K562 (cell line): ENCODE measurements at regions of chr6 and their contacts with region 1.

Region 1: DNA sequence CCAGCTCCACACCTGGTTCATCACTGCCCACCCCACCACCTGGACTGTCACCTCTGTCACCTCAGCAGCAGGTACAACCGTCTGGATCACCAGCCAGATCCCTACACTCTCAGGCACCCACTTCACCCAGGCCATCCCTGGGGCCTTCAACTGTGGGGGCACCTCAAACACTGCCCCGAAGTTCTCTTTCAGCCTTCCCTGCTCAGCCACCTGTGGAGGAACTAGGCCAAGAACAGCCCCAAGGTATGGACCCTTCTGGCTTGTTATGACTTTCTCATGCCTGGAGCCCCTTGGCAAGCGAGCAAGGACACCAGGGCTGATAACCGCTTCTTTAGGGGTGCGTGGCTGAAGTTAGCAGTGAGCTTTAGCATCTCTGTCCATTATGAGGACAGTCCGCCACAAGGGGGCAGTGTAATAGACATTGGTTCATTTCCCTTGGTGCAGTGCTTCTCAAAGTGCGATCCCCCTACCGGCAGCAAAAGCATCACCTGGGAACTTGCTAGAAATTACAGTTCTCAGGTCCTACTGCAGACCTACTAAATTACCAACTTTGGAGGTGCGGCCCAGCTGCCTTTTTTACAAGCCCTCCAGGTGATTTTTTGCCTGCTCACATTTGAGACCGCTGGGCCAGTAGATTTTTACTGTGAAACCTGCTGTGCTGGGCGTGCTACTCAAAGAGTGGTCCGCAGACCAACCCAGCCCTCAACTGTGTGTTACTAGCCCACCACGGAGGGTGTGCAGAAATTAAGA is 32.5 kb downstream of the PNPLA1 start:
- DNase-seq: peak; percentile 85 to 97 (median 88)
- ATAC-seq: peak; percentile 98
- H3K4me3 ChIP-seq: no peak overlapping the region
- H3K27ac ChIP-seq: no peak overlapping the region
- H3K4me1 ChIP-seq: no peaks in the 10 kb centered on the region
- H3K27me3 ChIP-seq: peaks cover 35 to 57% of the 10 kb centered on the region in 2 experiments
- CTCF ChIP-seq: peak; percentile 99
- EP300 ChIP-seq: peak; percentile 24; the same call in 1 of the 2 replicates
- POLR2A ChIP-seq: no peak
- RAD21 ChIP-seq: peak; percentile 84 to 92

Region 2: DNA sequence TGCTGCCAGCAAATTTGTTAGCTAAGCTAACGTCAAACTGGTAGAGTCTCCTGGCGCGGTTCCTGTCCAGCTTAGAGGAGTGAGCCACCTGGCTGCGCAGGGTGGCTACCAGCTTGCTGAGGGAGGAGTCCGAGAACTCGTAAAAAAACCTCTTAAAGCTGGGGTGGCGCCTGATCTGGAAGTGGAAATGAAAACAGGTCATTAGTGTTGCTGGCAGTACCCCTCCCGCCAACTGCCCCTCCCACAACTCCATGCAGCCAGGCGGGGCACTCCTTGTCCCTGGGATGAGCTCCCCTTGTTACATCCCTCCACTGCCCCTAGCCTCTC is 17.0 kb after region 1 on chr6:
- CTCF ChIA-PET with region 1: no interaction called
- POLR2A ChIA-PET with region 1: interaction called, 7 read pairs
- in situ Hi-C with region 1: no loop called
- intact Hi-C with region 1: loop called (anchors 2 kb)
- DNase-seq: no peak
- ATAC-seq: peak; percentile 17; the same call in 1 of the 3 replicates
- H3K4me3 ChIP-seq: no peak overlapping the region
- H3K27ac ChIP-seq: no peak overlapping the region
- H3K4me1 ChIP-seq: peaks cover 0 to 5% of the 10 kb centered on the region in 2 experiments; a peak in 1 of 5 replicates
- H3K27me3 ChIP-seq: peaks cover 22 to 72% of the 10 kb centered on the region in 2 experiments; a peak in 4 of 5 replicates
- CTCF ChIP-seq: no peak
- EP300 ChIP-seq: no peak
- POLR2A ChIP-seq: no peak
- RAD21 ChIP-seq: no peak